ENCODE measurements at regions of chr18 and their contacts with region 1.

Region 1: GRCh38 chr18:21851327-21851972 is 110.9 kb downstream of the MIB1 start:
- DNase-seq: no peak
- H3K4me3 Mint-ChIP-seq: no peak overlapping the region
- H3K27ac Mint-ChIP-seq: no peak overlapping the region
- H3K4me1 Mint-ChIP-seq: no peaks in the 10 kb centered on the region
- H3K27me3 Mint-ChIP-seq: no peaks in the 10 kb centered on the region
- CTCF ChIP-seq: no peak

Region 2: DNA sequence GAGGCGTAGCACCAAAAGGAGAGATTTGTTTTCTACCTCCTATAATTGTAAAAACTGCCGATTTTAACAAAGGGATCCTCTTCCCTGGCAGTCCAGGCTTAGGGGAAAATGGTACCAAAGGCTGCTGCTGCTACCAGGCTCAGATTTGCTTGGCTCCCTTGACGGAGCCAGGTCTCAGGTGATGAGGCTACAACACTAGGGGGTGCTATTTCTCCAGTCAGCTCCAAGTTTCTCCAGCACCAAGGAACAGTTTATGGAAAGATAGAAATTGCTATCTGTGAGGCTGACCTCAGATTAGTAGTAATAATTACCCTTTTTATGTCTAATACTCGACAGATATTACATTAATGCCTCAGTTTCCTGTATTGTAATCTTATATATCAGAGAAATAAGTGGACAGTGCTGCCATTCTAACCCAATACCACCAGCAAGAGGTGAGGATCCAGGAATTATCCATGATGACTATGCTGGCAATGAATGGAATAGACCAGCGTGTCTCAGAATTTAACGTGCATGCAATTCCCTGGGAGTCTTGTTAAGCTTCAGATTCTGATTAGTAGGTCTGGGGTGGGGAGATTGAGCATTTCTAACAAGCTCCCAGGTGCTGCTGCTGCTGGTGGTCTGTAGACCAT is 362.2 kb before region 1 on chr18:
- CTCF ChIA-PET with region 1: no interaction called
- intact Hi-C with region 1: loop called (anchors 2 kb)
- DNase-seq: peak; percentile 60
- H3K4me3 Mint-ChIP-seq: no peak overlapping the region
- H3K27ac Mint-ChIP-seq: no peak overlapping the region
- H3K4me1 Mint-ChIP-seq: peaks cover 8% of the 10 kb centered on the region
- H3K27me3 Mint-ChIP-seq: no peaks in the 10 kb centered on the region
- CTCF ChIP-seq: peak; percentile 75

Region 3: GRCh38 chr18:21786526-21786925 is 64.9 kb before region 1 on chr18:
- CTCF ChIA-PET with region 1: no interaction called
- intact Hi-C with region 1: loop called (anchors 2 kb)
- DNase-seq: no peak
- H3K4me3 Mint-ChIP-seq: no peak overlapping the region
- H3K27ac Mint-ChIP-seq: no peak overlapping the region
- H3K4me1 Mint-ChIP-seq: no peaks in the 10 kb centered on the region
- H3K27me3 Mint-ChIP-seq: no peaks in the 10 kb centered on the region
- CTCF ChIP-seq: no peak

Region 4: DNA sequence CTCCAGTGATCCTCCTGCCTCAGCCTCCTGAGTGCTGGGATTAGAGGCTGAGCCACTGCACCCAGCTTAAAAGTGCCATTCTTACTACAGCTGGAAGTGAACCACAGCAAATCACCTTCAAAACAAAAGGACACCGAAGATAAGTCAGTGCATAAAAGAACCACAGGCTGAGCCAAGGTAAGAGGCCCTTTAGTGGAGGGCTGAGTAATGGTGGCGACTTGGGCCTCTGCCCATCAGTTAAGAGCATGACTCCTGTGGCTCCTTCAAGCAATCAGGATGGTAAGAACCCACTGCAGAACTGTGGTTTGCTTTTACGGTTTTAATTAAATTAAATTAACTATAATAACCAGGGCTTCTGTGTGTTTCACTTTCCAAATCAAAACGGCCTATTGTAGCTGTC is 491.2 kb after region 1 on chr18:
- CTCF ChIA-PET with region 1: no interaction called
- intact Hi-C with region 1: no loop called
- DNase-seq: peak; percentile 71
- H3K4me3 Mint-ChIP-seq: no peak overlapping the region
- H3K27ac Mint-ChIP-seq: no peak overlapping the region
- H3K4me1 Mint-ChIP-seq: peaks cover 73% of the 10 kb centered on the region
- H3K27me3 Mint-ChIP-seq: no peaks in the 10 kb centered on the region
- CTCF ChIP-seq: no peak